Prostate gland (tissue), 2 donors: ENCODE measurements at regions of chrX and their contacts with region 1.

Region 1: DNA sequence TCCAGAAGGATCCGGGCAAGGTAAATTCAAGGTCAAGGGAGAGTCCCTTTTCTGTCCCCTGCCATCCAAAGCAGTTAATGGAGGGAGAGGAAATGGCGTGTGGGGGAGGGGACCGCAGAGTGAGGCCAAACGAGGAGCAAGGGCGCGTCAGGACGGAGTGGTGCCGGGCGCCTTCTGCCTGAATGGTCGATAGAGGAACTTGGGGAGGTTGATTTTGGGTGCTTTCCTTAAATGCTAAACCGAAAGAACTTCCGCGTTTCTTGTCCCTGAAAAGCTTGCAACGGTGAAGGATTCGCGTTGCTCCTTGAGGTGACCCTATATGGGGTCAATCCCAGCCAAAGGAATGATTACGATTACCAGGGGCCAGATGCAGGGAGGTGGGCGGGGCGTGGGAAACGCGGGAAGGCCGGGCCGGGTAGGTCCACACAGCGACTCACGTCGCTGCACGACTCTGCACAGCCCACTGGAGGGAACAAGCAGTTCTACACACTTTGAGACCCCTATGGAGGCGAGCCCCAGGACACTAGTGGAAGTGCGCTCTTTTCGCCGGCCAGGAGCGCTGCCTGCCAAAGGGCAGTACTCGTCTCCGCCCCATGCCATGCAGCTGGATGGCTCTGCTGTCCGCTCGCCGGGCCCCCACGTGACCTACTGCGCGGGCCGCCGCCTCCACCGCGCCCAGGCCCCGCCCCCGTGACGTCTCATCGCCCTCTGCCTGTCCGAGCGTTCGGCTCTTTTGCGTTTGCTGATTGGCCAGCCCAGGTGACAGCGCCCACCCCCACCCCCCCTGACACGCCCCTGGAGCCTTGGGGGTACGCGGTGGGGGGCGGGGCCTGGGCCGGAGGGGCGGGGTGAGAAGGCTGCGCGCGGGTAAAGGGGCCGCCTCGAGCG is 452 bp upstream of the GK start:
- DNase-seq: peak; percentile 92
- H3K4me3 ChIP-seq: peak overlapping the region; percentile 44 to 46
- H3K27ac ChIP-seq: peak overlapping the region; percentile 61 to 69
- H3K4me1 ChIP-seq: no peaks in the 10 kb centered on the region
- H3K27me3 ChIP-seq: no peaks in the 10 kb centered on the region
- CTCF ChIP-seq: no peak
- POLR2A ChIP-seq: peak; percentile 11

Region 2: DNA sequence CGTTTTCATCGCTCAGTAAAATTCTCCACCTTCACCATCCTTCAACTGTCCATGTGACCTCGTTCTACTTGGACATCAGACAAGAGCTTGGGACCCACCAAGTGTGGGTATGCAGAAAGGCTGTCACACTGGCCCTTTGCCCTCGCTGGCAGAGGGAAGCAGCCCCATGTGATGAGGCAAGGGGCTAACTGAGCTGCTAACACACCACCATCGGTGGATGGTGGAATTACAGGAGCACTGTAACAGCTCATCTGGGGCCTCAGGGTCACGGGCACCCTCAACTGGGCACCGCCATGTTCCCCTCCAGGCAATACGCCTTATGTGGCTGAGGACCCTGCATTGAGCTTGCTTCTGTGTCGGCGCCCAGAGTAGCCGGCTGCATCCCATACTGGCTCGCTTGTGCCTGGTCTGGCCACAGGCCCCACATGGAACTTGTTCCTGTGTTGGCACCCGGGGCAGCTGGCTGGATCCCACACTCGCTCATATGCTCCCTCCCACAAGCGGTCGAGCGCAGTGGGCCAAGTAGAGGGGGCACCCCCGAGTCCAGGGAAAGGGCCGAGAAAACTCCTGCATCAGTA is 126.8 kb after region 1 on chrX:
- intact Hi-C with region 1: no loop called
- DNase-seq: no peak
- H3K4me3 ChIP-seq: no peak overlapping the region
- H3K27ac ChIP-seq: no peak overlapping the region
- H3K4me1 ChIP-seq: no peaks in the 10 kb centered on the region
- H3K27me3 ChIP-seq: no peaks in the 10 kb centered on the region
- CTCF ChIP-seq: no peak
- POLR2A ChIP-seq: no peak

Region 3: GRCh38 chrX:30889147-30890140 is 236.7 kb after region 1 on chrX and contains the start of gene TAB3:
- intact Hi-C with region 1: loop called (anchors 5 kb)
- DNase-seq: peak; percentile 93
- H3K4me3 ChIP-seq: peak within 1 kb of the TSS; percentile 63 to 76
- H3K27ac ChIP-seq: peak within 1 kb of the TSS; percentile 86 to 90
- H3K4me1 ChIP-seq: no peaks in the 10 kb centered on the region
- H3K27me3 ChIP-seq: no peaks in the 10 kb centered on the region
- CTCF ChIP-seq: peak in 1 of 4 experiments; percentile 5
- POLR2A ChIP-seq: peak; percentile 65
- total RNA-seq, gene TAB3: 53.1 to 166 TPM